Sciatic nerve (tissue), 2 donors: ENCODE measurements at regions of chr7 and their contacts with region 1.

Region 1: DNA sequence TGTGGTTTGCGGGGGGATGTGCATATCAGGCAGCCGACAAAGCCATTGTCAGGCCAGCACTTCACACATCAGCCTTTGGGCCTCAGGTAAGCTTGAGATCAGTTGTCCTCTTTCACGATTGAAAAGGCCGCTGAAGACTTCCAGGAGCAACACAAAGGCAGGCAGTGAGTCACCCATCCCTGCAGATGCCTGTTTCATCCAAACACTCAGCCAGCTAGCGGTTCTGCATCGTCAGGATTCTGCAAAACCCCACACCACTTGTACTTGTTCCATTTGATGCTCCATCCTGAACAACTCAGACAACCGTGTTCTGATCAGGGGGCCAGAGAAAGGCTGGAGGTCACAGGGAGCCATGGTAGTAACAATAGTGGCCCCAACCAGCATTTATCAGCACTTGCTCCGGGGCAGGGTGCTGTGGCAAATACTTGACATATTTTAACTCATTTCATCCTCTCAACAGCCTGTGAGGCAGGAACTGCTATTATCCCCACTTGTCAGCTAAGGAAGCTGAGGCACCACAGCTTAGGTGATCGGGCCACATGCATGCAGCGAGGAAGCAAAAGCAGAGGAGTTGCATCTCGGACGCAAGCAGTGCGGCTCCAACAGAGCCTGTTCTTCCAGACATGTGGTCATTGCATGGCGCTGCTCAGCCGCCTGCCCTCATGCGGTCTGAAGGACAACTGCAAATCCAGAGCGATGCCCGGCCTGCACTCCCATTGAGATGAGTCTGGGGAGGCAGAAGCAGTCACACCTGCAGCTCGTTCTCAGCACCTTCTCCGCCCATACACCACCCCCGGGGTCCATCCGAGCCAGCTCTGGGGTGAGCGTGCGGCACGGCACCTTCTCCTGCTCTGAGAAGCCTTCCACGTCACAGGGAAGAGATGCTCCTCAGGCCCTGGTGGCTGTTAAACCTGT is 144.9 kb downstream of the PAXIP1 start:
- DNase-seq: no peak
- ATAC-seq: no peak

Region 2: DNA sequence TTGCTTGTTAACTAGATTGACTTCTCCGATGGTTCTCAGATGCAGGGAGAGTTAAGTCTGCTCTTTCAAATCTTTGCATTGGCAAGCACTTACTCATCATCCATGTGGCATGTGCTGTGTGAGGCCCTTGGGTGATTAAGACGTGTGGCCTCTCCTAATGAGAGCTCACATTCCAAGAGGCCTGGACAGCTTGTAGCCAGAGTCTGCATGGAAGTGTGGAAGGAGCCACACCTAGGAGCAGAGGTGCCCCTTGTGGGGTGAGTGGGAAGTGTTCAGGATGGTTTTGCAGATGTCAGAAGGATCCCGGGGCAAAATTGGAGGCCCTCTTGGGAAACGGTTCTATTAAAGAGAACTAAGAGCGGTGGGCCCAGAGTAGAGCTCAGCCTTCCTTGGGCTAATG is 81.0 kb before region 1 on chr7:
- intact Hi-C with region 1: no loop called
- DNase-seq: no peak
- ATAC-seq: no peak

Region 3: DNA sequence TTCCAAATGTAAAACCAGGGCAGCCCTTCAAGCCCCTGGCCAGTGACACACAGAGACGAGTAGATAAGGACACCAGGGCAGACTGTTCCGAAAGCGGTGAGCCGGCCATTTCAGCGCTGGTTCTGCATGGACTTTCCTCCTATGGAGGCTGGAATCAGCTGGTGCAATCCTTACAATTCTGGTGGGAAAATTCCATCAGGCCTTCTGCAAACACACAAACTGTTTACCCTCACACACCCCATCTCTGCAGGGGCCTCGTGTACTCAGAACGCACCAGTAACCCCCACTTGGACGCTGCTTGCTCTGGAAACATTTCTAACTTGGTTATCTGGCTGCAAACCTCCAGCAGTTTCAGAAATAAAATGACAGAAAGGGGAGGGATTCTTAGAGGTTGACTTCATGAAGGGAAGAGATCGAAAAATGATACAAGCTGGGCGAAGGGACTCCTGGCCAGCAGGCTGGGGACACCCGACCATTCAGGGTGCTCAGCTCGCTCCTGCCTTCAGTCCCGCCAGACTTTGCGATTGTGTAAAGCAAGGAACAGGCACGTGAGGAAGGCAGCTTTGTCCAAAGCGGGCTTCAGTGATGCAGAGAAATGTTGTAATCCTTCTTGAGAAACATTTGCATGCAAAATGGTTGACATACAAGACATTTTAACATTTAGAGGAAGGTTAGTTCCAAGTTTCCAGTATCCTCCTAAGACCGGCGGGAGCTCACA is 973.9 kb after region 1 on chr7:
- intact Hi-C with region 1: loop called (anchors 5 kb)
- DNase-seq: peak; percentile 38
- ATAC-seq: no peak